CD8-positive, alpha-beta memory T cell (primary cell): ENCODE measurements at regions of chr6 and their contacts with region 1.

Region 1: DNA sequence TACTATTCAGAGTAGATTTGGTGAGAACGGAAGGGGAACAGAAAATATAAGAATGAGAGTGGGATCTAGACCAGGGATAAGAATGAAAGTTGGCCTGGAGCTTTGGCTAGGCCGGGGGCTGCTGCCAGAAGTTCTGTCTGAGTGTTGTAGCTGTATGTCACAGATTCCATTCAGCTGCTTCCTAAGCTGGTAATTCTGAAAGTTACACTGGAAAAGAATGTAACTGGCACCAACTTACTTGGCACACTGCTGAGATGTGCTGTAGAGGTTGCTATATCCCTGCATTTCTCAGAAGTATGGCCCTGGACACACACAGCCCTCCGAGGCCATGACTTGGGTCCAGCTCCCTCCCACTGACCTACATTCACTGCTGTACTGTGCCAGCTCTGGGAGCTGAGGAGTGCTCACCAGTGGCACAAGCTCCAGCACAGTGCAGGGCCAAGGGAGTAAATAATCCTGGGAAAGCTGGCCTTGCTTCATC is 25.8 kb upstream of the TMEM217 start:
- DNase-seq: no peak
- H3K4me3 ChIP-seq: no peak overlapping the region
- H3K4me3 Mint-ChIP-seq: no peak overlapping the region
- H3K27ac ChIP-seq: no peak overlapping the region
- H3K27ac Mint-ChIP-seq: peak overlapping the region in 2 of 8 donors; percentile 3 to 84
- H3K4me1 ChIP-seq: peaks cover 5% of the 10 kb centered on the region
- H3K4me1 Mint-ChIP-seq: peaks cover 7 to 15% (median 9%) of the 10 kb centered on the region in 3 donors
- H3K27me3 ChIP-seq: no peaks in the 10 kb centered on the region
- H3K27me3 Mint-ChIP-seq: no peaks in the 10 kb centered on the region

Region 2: DNA sequence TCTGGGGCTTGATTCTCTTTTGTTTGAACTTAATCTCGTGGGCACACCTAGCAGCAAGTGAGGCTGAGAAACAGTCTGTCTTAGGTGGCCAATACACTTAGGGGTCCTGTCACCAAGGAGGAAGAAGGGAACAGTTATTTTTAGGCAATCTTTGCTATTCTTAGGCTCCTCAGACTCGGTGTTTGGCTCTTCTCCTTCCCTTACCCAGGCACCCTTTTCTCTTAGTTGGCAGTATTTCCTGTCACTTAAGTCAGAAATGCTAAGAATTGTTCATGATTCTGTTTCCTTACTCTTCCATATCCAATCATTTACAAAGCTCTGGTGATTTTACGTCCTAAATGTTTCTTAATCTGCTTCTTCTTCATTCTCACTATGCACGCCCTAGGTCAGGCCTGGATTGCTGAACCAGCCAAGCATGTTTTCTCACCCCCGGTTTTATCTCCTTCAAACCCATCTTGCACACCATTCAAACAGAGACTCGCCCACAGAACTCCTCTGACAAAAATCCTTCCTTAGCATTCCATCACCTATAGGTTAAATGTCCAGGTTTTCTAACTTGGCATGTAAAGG is 19.5 kb after region 1 on chr6:
- CTCF ChIA-PET with region 1: no interaction called
- POLR2A ChIA-PET with region 1: interaction called, 14 read pairs
- DNase-seq: no peak
- H3K4me3 ChIP-seq: no peak overlapping the region
- H3K4me3 Mint-ChIP-seq: no peak overlapping the region
- H3K27ac ChIP-seq: no peak overlapping the region
- H3K27ac Mint-ChIP-seq: peak overlapping the region in 1 of 8 donors; percentile 26
- H3K4me1 ChIP-seq: no peaks in the 10 kb centered on the region
- H3K4me1 Mint-ChIP-seq: no peaks in the 10 kb centered on the region
- H3K27me3 ChIP-seq: no peaks in the 10 kb centered on the region
- H3K27me3 Mint-ChIP-seq: no peaks in the 10 kb centered on the region